Prostate gland (tissue), 2 donors: ENCODE measurements at regions of chr2 and their contacts with region 1.

Region 1: DNA sequence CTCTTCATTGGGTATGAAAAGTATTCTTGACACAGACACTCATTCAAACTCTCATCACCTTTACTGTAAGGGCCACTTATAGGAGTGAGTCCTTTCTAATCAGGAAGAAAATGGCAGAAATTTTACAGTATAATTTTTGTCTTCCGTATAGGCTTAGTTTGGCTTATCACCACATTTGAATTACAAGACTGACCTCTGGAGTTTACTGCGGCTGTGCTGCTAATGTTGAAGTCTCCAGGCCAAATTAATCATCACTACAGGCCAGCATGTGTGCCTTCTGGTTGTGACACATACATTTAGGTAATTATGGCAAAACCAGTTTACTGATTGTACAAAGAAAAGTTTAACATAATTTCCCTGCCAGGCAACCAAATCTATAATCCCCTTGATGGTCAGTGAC is 753.6 kb upstream of the GCFC2 start:
- DNase-seq: no peak
- H3K4me3 ChIP-seq: no peak overlapping the region
- H3K27ac ChIP-seq: no peak overlapping the region
- H3K4me1 ChIP-seq: no peaks in the 10 kb centered on the region
- H3K27me3 ChIP-seq: no peaks in the 10 kb centered on the region
- CTCF ChIP-seq: no peak
- POLR2A ChIP-seq: no peak

Region 2: GRCh38 chr2:76437564-76437963 is 26.7 kb before region 1 on chr2:
- intact Hi-C with region 1: loop called (anchors 2 kb)
- DNase-seq: no peak
- H3K4me3 ChIP-seq: no peak overlapping the region
- H3K27ac ChIP-seq: no peak overlapping the region
- H3K4me1 ChIP-seq: no peaks in the 10 kb centered on the region
- H3K27me3 ChIP-seq: no peaks in the 10 kb centered on the region
- CTCF ChIP-seq: no peak
- POLR2A ChIP-seq: no peak